Lower lobe of right lung (tissue), 2 donors: ENCODE measurements at regions of chr17 and their contacts with region 1.

Region 1: GRCh38 chr17:76467366-76467765 is at the start of gene AANAT:
- DNase-seq: peak; percentile 45
- ATAC-seq: no peak
- H3K4me3 ChIP-seq: no peak within 1 kb of the TSS
- H3K27ac ChIP-seq: no peak within 1 kb of the TSS
- H3K4me1 ChIP-seq: peaks cover 5% of the 10 kb centered on the region
- H3K27me3 ChIP-seq: no peaks in the 10 kb centered on the region
- CTCF ChIP-seq: no peak
- total RNA-seq, gene AANAT: not detected

Region 2: GRCh38 chr17:76506408-76507349 is 39.3 kb after region 1 on chr17:
- intact Hi-C with region 1: loop called (anchors 5 kb)
- DNase-seq: peak; percentile 86
- ATAC-seq: peak; percentile 83
- H3K4me3 ChIP-seq: no peak overlapping the region
- H3K27ac ChIP-seq: no peak overlapping the region
- H3K4me1 ChIP-seq: peaks cover 25% of the 10 kb centered on the region
- H3K27me3 ChIP-seq: no peaks in the 10 kb centered on the region
- CTCF ChIP-seq: peak; percentile 97